Panc1 (cell line): ENCODE measurements at regions of chr1 and their contacts with region 1.

Region 1: GRCh38 chr1:204565617-204566582 is 49.7 kb downstream of the MDM4 start:
- DNase-seq: peak; percentile 61
- ATAC-seq: peak; percentile 83
- H3K4me3 ChIP-seq: no peak overlapping the region
- H3K27ac ChIP-seq: peak overlapping the region; percentile 41; the same call in 1 of the 2 replicates
- H3K4me1 ChIP-seq: peaks cover 15% of the 10 kb centered on the region
- H3K27me3 ChIP-seq: no peaks in the 10 kb centered on the region
- CTCF ChIP-seq: peak; percentile 79

Region 2: GRCh38 chr1:204941421-204942338 is 375.8 kb after region 1 on chr1:
- CTCF ChIA-PET with region 1: interaction called, 8 read pairs
- POLR2A ChIA-PET with region 1: no interaction called
- in situ Hi-C with region 1: no loop called
- intact Hi-C with region 1: loop called (anchors 10 kb)
- DNase-seq: peak; percentile 53
- ATAC-seq: peak; percentile 70; the same call in 1 of the 2 replicates
- H3K4me3 ChIP-seq: no peak overlapping the region
- H3K27ac ChIP-seq: no peak overlapping the region
- H3K4me1 ChIP-seq: no peaks in the 10 kb centered on the region; the same call in 1 of the 2 replicates
- H3K27me3 ChIP-seq: peaks cover 2% of the 10 kb centered on the region; the same call in 1 of the 2 replicates
- CTCF ChIP-seq: peak; percentile 96